Panc1 (cell line): ENCODE measurements at regions of chr16 and their contacts with region 1.

Region 1: DNA sequence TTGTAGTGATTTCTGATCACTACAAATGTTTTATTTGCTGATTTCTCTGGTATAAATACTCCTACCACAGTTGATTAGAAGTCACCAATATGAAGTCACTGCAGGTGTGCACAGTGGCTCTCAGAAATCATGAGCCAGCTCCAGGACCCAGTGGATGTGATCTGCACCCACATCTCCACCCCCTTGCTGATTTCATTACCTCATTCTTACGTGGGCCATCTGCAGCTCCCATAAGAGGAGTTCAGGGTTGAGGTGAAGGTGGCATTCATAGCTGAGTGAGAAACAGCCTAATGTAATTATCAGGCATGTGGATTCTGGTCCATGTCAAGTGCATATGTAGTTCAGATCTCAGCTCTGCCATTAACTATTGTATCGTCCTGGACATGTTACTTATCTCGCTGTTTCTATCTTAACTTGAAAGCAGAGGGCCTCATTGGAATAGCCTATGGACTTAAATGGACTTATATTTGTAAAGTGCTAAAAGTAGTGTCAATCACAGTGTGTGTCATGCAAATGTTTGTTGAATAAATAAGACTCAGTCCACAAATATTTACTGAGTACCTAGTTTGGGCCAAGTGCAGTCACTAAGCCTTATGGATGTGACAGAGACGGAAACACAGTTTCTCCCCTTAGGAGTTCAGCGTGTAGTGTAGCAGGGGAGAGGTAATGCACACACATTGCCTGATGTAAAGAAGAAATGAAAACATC is 40.7 kb upstream of the ZKSCAN2 start:
- DNase-seq: peak; percentile 67
- ATAC-seq: peak; percentile 88
- H3K4me3 ChIP-seq: no peak overlapping the region
- H3K27ac ChIP-seq: no peak overlapping the region
- H3K4me1 ChIP-seq: 0 out of 2 replicates have a peak, but pooled peaks cover 2% of the 10 kb centered on the region
- H3K27me3 ChIP-seq: no peaks in the 10 kb centered on the region
- CTCF ChIP-seq: no peak

Region 2: DNA sequence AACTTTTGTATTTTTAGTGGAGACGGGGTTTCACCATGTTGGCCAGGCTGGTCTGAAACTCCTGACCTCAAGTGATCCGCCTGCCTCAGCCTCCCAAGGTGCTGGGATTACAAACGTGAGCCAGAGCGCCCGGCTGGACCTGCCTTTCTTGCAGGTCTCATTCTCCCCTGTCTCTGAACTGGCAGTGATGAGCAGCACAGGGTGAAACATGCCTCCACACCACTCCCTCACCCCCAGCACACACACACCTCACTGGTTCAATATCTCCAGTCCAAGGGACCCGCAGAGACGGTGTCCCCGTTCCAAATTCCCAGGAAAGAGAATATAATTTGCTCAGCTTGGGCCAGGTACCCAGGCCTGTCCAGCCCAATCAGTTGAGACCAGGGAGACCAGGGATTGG is 429.3 kb before region 1 on chr16:
- CTCF ChIA-PET with region 1: no interaction called
- POLR2A ChIA-PET with region 1: interaction called, 10 read pairs
- in situ Hi-C with region 1: no loop called
- intact Hi-C with region 1: no loop called
- DNase-seq: no peak
- ATAC-seq: peak; percentile 53
- H3K4me3 ChIP-seq: no peak overlapping the region
- H3K27ac ChIP-seq: no peak overlapping the region
- H3K4me1 ChIP-seq: no peaks in the 10 kb centered on the region
- H3K27me3 ChIP-seq: no peaks in the 10 kb centered on the region
- CTCF ChIP-seq: no peak

Region 3: DNA sequence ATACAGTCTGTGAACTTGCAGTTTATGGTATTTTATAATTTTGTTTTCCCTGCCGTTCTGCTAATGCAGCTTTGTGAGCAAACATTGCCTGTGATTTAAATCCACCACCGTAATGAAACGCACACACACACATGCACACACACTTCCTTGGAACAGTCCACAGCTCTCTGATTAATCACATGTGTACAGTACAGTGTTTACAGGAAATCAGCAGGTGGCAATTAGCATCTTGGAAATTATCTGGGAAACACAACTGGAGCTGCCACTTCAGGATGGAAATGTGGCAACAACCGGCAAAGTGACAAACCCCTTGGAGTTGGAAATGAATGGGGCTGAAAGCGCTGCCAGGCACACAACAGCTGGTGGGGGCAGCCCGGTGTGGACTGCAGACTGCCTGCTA is 27.7 kb before region 1 on chr16:
- CTCF ChIA-PET with region 1: no interaction called
- POLR2A ChIA-PET with region 1: no interaction called
- in situ Hi-C with region 1: no loop called
- intact Hi-C with region 1: no loop called
- DNase-seq: no peak
- ATAC-seq: no peak
- H3K4me3 ChIP-seq: no peak overlapping the region
- H3K27ac ChIP-seq: no peak overlapping the region
- H3K4me1 ChIP-seq: no peaks in the 10 kb centered on the region
- H3K27me3 ChIP-seq: no peaks in the 10 kb centered on the region
- CTCF ChIP-seq: no peak

Region 4: GRCh38 chr16:25317732-25318316 is 19.5 kb after region 1 on chr16:
- CTCF ChIA-PET with region 1: no interaction called
- POLR2A ChIA-PET with region 1: no interaction called
- in situ Hi-C with region 1: no loop called
- intact Hi-C with region 1: no loop called
- DNase-seq: no peak
- ATAC-seq: no peak
- H3K4me3 ChIP-seq: no peak overlapping the region
- H3K27ac ChIP-seq: no peak overlapping the region
- H3K4me1 ChIP-seq: no peaks in the 10 kb centered on the region
- H3K27me3 ChIP-seq: peaks cover 2% of the 10 kb centered on the region; the same call in 1 of the 2 replicates
- CTCF ChIP-seq: no peak

Region 5: GRCh38 chr16:27154705-27155521 is 1856.6 kb after region 1 on chr16:
- CTCF ChIA-PET with region 1: no interaction called
- POLR2A ChIA-PET with region 1: interaction called, 11 read pairs
- in situ Hi-C with region 1: no loop called
- intact Hi-C with region 1: no loop called
- DNase-seq: no peak
- ATAC-seq: peak; percentile 90
- H3K4me3 ChIP-seq: peak overlapping the region in 1 of 2 experiments; percentile 30; a peak in 2 of 4 replicates
- H3K27ac ChIP-seq: no peak overlapping the region
- H3K4me1 ChIP-seq: no peaks in the 10 kb centered on the region
- H3K27me3 ChIP-seq: no peaks in the 10 kb centered on the region
- CTCF ChIP-seq: peak; percentile 98